CD4-positive, alpha-beta T cell (primary cell): ENCODE measurements at regions of chr17 and their contacts with region 1.

Region 1: DNA sequence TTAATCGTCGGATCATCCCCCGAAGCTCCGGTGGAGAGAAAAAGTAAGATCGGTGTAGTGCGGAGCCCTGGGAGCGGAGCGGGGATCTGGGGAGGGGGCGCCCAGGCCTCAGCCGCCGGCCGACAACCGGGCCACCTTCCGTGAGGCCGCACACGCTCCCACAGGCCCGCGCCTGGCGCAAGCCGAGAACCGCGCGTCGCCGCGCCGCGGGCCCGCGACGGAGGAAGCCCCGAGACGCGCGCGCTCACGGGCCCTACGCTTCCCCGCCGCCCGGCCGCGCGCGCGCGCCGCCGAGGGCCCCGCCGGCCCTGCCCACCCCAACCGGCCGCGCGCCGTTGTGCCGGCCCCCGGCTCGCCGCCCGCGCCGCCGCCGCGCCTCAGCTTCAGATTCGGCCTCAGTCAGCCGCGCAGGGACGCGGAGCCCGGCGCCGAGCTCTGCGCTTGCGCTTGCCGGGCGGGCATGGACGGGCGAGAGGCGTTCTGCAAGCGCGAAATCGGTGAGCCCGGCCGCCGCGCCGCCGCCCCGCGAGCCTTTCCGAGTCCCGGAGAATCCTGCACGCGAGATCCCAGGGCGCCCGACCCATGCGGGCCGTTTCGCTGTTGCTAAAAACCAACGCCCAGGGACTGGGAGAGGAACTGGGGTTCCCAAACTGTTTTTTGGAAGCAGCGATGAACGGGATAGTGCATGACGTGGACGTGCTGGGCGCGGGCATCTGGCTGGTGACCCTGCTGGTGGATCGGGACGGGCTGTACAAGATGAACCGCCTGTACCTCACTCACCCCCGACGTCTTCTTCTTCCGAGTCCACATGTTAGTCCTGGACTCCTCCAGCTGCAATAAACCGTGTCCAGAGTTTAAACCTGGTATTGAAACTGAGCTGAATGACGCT is 28.0 kb upstream of the LRRC37A start:
- DNase-seq: peak; percentile 55 to 96 (median 82)
- ATAC-seq: peak; percentile 43
- H3K4me3 ChIP-seq: peak overlapping the region; percentile 84
- H3K4me3 Mint-ChIP-seq: peak overlapping the region; percentile 89
- H3K27ac ChIP-seq: peak overlapping the region; percentile 70 to 72
- H3K27ac Mint-ChIP-seq: peak overlapping the region; percentile 97
- H3K4me1 ChIP-seq: peaks cover 35% of the 10 kb centered on the region
- H3K4me1 Mint-ChIP-seq: peaks cover 31% of the 10 kb centered on the region
- H3K27me3 ChIP-seq: no peaks in the 10 kb centered on the region
- H3K27me3 Mint-ChIP-seq: no peaks in the 10 kb centered on the region
- CTCF ChIP-seq: no peak

Region 2: DNA sequence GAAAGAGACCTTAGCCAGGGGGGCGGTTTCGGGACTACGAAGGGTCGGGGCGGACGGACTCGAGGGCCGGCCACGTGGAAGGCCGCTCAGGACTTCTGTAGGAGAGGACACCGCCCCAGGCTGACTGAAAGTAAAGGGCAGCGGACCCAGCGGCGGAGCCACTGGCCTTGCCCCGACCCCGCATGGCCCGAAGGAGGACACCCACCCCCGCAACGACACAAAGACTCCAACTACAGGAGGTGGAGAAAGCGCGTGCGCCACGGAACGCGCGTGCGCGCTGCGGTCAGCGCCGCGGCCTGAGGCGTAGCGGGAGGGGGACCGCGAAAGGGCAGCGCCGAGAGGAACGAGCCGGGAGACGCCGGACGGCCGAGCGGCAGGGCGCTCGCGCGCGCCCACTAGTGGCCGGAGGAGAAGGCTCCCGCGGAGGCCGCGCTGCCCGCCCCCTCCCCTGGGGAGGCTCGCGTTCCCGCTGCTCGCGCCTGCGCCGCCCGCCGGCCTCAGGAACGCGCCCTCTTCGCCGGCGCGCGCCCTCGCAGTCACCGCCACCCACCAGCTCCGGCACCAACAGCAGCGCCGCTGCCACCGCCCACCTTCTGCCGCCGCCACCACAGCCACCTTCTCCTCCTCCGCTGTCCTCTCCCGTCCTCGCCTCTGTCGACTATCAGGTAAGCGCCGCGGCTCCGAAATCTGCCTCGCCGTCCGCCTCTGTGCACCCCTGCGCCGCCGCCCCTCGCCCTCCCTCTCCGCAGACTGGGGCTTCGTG is 372.7 kb before region 1 on chr17 and contains the start of gene MAPT:
- CTCF ChIA-PET with region 1: no interaction called
- POLR2A ChIA-PET with region 1: no interaction called
- intact Hi-C with region 1: loop called in 1 of 2 experiments (anchors 5 kb)
- DNase-seq: peak; percentile 61 to 92 (median 74)
- ATAC-seq: peak; percentile 86
- H3K4me3 ChIP-seq: peak within 1 kb of the TSS; percentile 71
- H3K4me3 Mint-ChIP-seq: peak within 1 kb of the TSS; percentile 92
- H3K27ac ChIP-seq: no peak within 1 kb of the TSS
- H3K27ac Mint-ChIP-seq: peak within 1 kb of the TSS; percentile 34
- H3K4me1 ChIP-seq: peaks cover 41% of the 10 kb centered on the region
- H3K4me1 Mint-ChIP-seq: peaks cover 19% of the 10 kb centered on the region
- H3K27me3 ChIP-seq: peaks cover 25 to 36% of the 10 kb centered on the region in 2 experiments
- H3K27me3 Mint-ChIP-seq: peaks cover 23% of the 10 kb centered on the region
- CTCF ChIP-seq: peak; percentile 69
- total RNA-seq, gene MAPT: 0.41 to 0.53 TPM